Gastrocnemius medialis (tissue), 4 donors: ENCODE measurements at regions of chr2 and their contacts with region 1.

Region 1: GRCh38 chr2:47906157-47907038 is at the start of gene FBXO11:
- DNase-seq: peak; percentile 93 to 96
- ATAC-seq: peak; percentile 87 to 88
- H3K4me3 ChIP-seq: peak within 1 kb of the TSS; percentile 86 to 99 (median 90)
- H3K27ac ChIP-seq: peak within 1 kb of the TSS; percentile 98 to 100 (median 99)
- H3K4me1 ChIP-seq: peaks cover 22 to 31% of the 10 kb centered on the region in 2 donors
- H3K27me3 ChIP-seq: no peaks in the 10 kb centered on the region
- CTCF ChIP-seq: peak in 4 of 5 experiments; percentile 44 to 56 (median 50)
- POLR2A ChIP-seq: peak; percentile 68 to 88
- total RNA-seq, gene FBXO11: 21.5 to 31.8 (median 28.4) TPM

Region 2: GRCh38 chr2:47558768-47559684 is 347.4 kb before region 1 on chr2:
- in situ Hi-C with region 1: no loop called
- intact Hi-C with region 1: no loop called
- DNase-seq: no peak
- ATAC-seq: no peak
- H3K4me3 ChIP-seq: no peak overlapping the region
- H3K27ac ChIP-seq: no peak overlapping the region
- H3K4me1 ChIP-seq: no peaks in the 10 kb centered on the region
- H3K27me3 ChIP-seq: peaks cover 0 to 7% (median 4%) of the 10 kb centered on the region in 3 donors
- CTCF ChIP-seq: no peak
- POLR2A ChIP-seq: no peak

Region 3: GRCh38 chr2:47782671-47783485 is 123.5 kb before region 1 on chr2 and contains the start of gene MSH6:
- in situ Hi-C with region 1: no loop called
- intact Hi-C with region 1: loop called (anchors 2 kb)
- DNase-seq: peak; percentile 73 to 81
- ATAC-seq: peak; percentile 92 to 93
- H3K4me3 ChIP-seq: peak within 1 kb of the TSS; percentile 93 to 100 (median 98)
- H3K27ac ChIP-seq: peak within 1 kb of the TSS; percentile 82 to 97 (median 88)
- H3K4me1 ChIP-seq: peaks cover 8 to 15% of the 10 kb centered on the region in 2 donors
- H3K27me3 ChIP-seq: no peaks in the 10 kb centered on the region
- CTCF ChIP-seq: peak in 1 of 5 experiments; percentile 18
- POLR2A ChIP-seq: peak; percentile 72 to 83
- total RNA-seq, gene MSH6: 9.4 to 26.6 (median 16.3) TPM

Region 4: DNA sequence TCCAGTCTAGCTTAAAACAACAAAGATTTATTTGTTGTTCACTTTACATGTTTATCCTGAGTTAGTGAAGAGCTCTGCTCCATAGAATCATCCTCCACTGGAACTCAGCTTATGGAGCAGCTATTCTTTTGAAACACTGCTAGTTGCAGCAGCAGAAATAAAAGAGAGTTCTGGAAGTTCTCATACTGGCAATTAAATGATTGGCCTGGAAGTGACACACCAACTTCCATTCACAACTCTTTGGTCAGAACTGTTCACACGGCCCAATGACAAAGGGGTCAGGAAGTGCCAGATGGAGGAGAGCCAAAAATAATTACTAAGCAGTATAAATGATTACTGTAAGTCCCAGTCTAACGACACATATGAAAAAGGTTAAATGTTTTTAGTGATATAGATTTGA is 39.2 kb before region 1 on chr2:
- in situ Hi-C with region 1: no loop called
- intact Hi-C with region 1: loop called (anchors 5 kb)
- DNase-seq: no peak
- ATAC-seq: peak; percentile 57 to 75
- H3K4me3 ChIP-seq: no peak overlapping the region
- H3K27ac ChIP-seq: peak overlapping the region; percentile 32 to 64 (median 42)
- H3K4me1 ChIP-seq: peaks cover 29 to 50% of the 10 kb centered on the region in 2 donors
- H3K27me3 ChIP-seq: no peaks in the 10 kb centered on the region
- CTCF ChIP-seq: no peak
- POLR2A ChIP-seq: no peak

Region 5: DNA sequence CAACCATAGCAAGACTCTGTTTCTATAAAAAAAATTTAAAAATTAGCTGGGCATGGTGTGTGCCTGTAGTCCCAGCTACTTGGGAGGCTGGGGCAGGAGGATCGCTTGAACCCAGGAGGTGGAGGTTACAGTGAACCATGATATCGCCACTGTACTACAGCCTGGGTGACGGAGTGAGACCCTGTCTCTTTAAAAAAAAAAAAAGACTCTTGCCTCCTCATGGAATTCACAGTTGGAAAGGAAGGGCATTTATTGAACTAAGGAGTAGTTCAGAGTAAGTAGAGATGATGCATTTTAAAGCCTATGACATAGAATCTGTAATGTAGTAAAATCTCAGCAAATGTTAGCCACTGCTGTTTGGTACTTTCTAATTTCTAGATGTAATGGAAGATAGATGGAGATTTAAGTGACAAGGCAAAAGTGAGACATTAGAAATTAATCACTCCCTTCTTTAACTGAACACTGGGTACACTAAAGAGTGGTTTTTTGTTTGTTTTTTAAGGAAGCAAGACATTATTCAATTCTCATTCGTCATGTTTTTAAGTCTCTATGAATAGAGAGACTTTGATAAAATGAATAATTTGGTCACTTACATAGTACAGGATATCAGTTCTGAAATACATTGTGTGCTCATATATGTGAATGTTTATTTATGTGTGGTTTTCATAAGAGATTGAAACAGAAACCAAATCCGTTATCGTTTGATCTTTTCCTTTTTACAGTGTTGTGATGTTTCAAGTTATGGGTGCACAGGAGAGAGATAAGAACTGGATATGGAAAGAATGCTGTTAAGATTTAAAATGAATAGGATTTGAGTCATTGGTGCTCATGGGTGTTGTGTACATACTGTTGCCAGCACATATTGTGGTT is 437.4 kb after region 1 on chr2:
- in situ Hi-C with region 1: no loop called
- intact Hi-C with region 1: loop called (anchors 5 kb)
- DNase-seq: no peak
- ATAC-seq: peak; percentile 25 to 27
- H3K4me3 ChIP-seq: peak overlapping the region; percentile 6 to 44 (median 16)
- H3K27ac ChIP-seq: peak overlapping the region; percentile 49 to 70 (median 62)
- H3K4me1 ChIP-seq: peaks cover 39 to 59% of the 10 kb centered on the region in 2 donors
- H3K27me3 ChIP-seq: no peaks in the 10 kb centered on the region
- CTCF ChIP-seq: no peak
- POLR2A ChIP-seq: no peak

Region 6: GRCh38 chr2:49207204-49207603 is 1300.8 kb after region 1 on chr2:
- in situ Hi-C with region 1: no loop called
- intact Hi-C with region 1: no loop called
- DNase-seq: no peak
- ATAC-seq: no peak
- H3K4me3 ChIP-seq: no peak overlapping the region
- H3K27ac ChIP-seq: no peak overlapping the region
- H3K4me1 ChIP-seq: no peaks in the 10 kb centered on the region
- H3K27me3 ChIP-seq: no peaks in the 10 kb centered on the region
- CTCF ChIP-seq: no peak
- POLR2A ChIP-seq: no peak